ENCODE measurements at regions of chr17 and their contacts with region 1.

Region 1: GRCh38 chr17:5854871-5855554 is 215.2 kb upstream of the WSCD1 start:
- DNase-seq: no peak
- ATAC-seq: no peak
- H3K4me3 ChIP-seq: no peak overlapping the region
- H3K27ac ChIP-seq: no peak overlapping the region
- H3K4me1 ChIP-seq: no peaks in the 10 kb centered on the region
- H3K27me3 ChIP-seq: no peaks in the 10 kb centered on the region
- CTCF ChIP-seq: no peak
- EP300 ChIP-seq: no peak
- POLR2A ChIP-seq: no peak
- RAD21 ChIP-seq: no peak

Region 2: GRCh38 chr17:5793899-5794298 is 61.1 kb before region 1 on chr17:
- CTCF ChIA-PET with region 1: no interaction called
- POLR2A ChIA-PET with region 1: no interaction called
- RAD21 ChIA-PET with region 1: no interaction called
- SMC1A ChIA-PET with region 1: no interaction called
- in situ Hi-C with region 1: loop called (anchors 10 kb)
- intact Hi-C with region 1: no loop called
- DNase-seq: no peak
- ATAC-seq: no peak
- H3K4me3 ChIP-seq: no peak overlapping the region
- H3K27ac ChIP-seq: no peak overlapping the region
- H3K4me1 ChIP-seq: no peaks in the 10 kb centered on the region
- H3K27me3 ChIP-seq: no peaks in the 10 kb centered on the region
- CTCF ChIP-seq: peak; percentile 4 to 22 (median 16); a peak in 2 of 6 replicates
- EP300 ChIP-seq: no peak
- POLR2A ChIP-seq: no peak
- RAD21 ChIP-seq: 0 out of 2 replicates have a peak, but pooled peaks have one; percentile 21

Region 3: GRCh38 chr17:5950878-5951277 is 95.9 kb after region 1 on chr17:
- CTCF ChIA-PET with region 1: no interaction called
- POLR2A ChIA-PET with region 1: no interaction called
- RAD21 ChIA-PET with region 1: no interaction called
- SMC1A ChIA-PET with region 1: no interaction called
- in situ Hi-C with region 1: no loop called
- intact Hi-C with region 1: no loop called
- DNase-seq: no peak
- ATAC-seq: no peak
- H3K4me3 ChIP-seq: no peak overlapping the region
- H3K27ac ChIP-seq: no peak overlapping the region
- H3K4me1 ChIP-seq: no peaks in the 10 kb centered on the region
- H3K27me3 ChIP-seq: no peaks in the 10 kb centered on the region; a peak in 1 of 4 replicates
- CTCF ChIP-seq: no peak
- EP300 ChIP-seq: no peak
- POLR2A ChIP-seq: no peak
- RAD21 ChIP-seq: no peak